ENCODE measurements at regions of chr13 and their contacts with region 1.

Region 1: GRCh38 chr13:91398413-91399272 is at the start of gene GPC5:
- DNase-seq: peak; percentile 79
- H3K4me3 Mint-ChIP-seq: peak within 1 kb of the TSS; percentile 76
- H3K27ac Mint-ChIP-seq: no peak within 1 kb of the TSS
- H3K4me1 Mint-ChIP-seq: peaks cover 15% of the 10 kb centered on the region
- H3K27me3 Mint-ChIP-seq: peaks cover 64% of the 10 kb centered on the region
- total RNA-seq, gene GPC5: 0.22 TPM in 1 of 2 replicates, not detected in the other

Region 2: GRCh38 chr13:91348906-91349435 is 49.7 kb before region 1 on chr13:
- intact Hi-C with region 1: loop called (anchors 1 kb)
- DNase-seq: peak; percentile 91
- H3K4me3 Mint-ChIP-seq: peak overlapping the region; percentile 99
- H3K27ac Mint-ChIP-seq: peak overlapping the region; percentile 98
- H3K4me1 Mint-ChIP-seq: peaks cover 53% of the 10 kb centered on the region
- H3K27me3 Mint-ChIP-seq: no peaks in the 10 kb centered on the region

Region 3: GRCh38 chr13:91375116-91375729 is 23.4 kb before region 1 on chr13:
- intact Hi-C with region 1: loop called (anchors 2 kb)
- DNase-seq: no peak
- H3K4me3 Mint-ChIP-seq: no peak overlapping the region
- H3K27ac Mint-ChIP-seq: no peak overlapping the region
- H3K4me1 Mint-ChIP-seq: peaks cover 12% of the 10 kb centered on the region
- H3K27me3 Mint-ChIP-seq: peaks cover 10% of the 10 kb centered on the region

Measured in activated T-helper 1 cell treated with anti-CD3 and anti-CD28 coated beads, Interleukin-12 subunit alpha, Interleukin-12 subunit beta, Interleukin-2, Interleukin-4 antibody, amounts not matched to agents 30 ng/mL and 10 ng/mL and 1 ng/mL, durations not matched to agents 14 hours and 24 hours and 36 hours (primary cell).